Caco-2 (cell line): ENCODE measurements at regions of chr9 and their contacts with region 1.

Region 1: DNA sequence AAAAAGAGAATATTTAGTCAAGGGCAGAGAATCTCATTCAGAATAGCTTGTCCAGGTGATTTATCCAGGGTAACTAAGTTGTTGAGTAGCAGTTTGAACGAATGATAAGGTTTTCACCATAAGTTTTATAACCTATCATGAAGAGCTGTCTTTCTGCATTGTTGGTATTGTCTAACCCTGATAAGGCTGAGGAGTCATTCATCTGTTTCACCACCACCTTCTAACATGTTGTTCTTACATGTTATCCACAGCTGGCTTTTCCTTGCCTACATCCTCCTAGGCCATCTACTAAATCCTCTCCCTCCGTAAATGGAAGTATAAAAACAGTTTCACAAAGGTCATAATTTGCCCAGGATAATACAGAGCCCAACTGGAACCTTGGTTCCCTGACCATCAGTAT is 24.1 kb downstream of the ZNF462 start:
- DNase-seq: no peak
- H3K4me3 ChIP-seq: no peak overlapping the region
- H3K4me3 Mint-ChIP-seq: no peak overlapping the region
- H3K27ac Mint-ChIP-seq: no peak overlapping the region
- H3K4me1 ChIP-seq: peaks cover 62% of the 10 kb centered on the region
- H3K4me1 Mint-ChIP-seq: peaks cover 44% of the 10 kb centered on the region
- H3K27me3 ChIP-seq: no peaks in the 10 kb centered on the region
- H3K27me3 Mint-ChIP-seq: no peaks in the 10 kb centered on the region
- CTCF ChIP-seq: no peak

Region 2: GRCh38 chr9:106613250-106613737 is 273.8 kb before region 1 on chr9:
- CTCF ChIA-PET with region 1: no interaction called
- POLR2A ChIA-PET with region 1: no interaction called
- intact Hi-C with region 1: no loop called
- DNase-seq: no peak
- H3K4me3 ChIP-seq: no peak overlapping the region
- H3K4me3 Mint-ChIP-seq: no peak overlapping the region
- H3K27ac Mint-ChIP-seq: no peak overlapping the region
- H3K4me1 ChIP-seq: peaks cover 2% of the 10 kb centered on the region
- H3K4me1 Mint-ChIP-seq: peaks cover 4% of the 10 kb centered on the region
- H3K27me3 ChIP-seq: no peaks in the 10 kb centered on the region
- H3K27me3 Mint-ChIP-seq: peaks cover 2% of the 10 kb centered on the region
- CTCF ChIP-seq: no peak

Region 3: DNA sequence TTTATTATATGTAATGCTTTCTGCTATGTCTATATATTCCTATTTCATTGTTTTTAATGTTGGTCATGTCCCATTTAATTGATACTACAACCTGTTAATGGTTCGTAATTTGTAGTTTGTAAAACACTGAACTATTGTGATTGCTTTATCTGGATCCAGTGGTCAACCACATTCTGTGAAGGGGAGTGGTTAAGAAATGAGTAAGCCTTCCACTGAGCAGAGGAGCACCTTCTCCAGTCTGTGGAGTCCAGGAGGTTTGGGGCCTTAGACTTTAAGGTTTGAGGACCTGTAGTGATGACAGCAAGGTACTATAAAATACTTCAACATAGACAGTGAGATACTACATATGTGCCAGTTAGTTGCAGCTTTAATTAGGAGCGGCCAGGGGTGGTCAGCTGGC is 328.3 kb after region 1 on chr9:
- CTCF ChIA-PET with region 1: no interaction called
- POLR2A ChIA-PET with region 1: interaction called, 14 read pairs
- intact Hi-C with region 1: no loop called
- DNase-seq: no peak
- H3K4me3 ChIP-seq: no peak overlapping the region
- H3K4me3 Mint-ChIP-seq: no peak overlapping the region
- H3K27ac Mint-ChIP-seq: no peak overlapping the region
- H3K4me1 ChIP-seq: peaks cover 12% of the 10 kb centered on the region
- H3K4me1 Mint-ChIP-seq: peaks cover 12% of the 10 kb centered on the region
- H3K27me3 ChIP-seq: no peaks in the 10 kb centered on the region
- H3K27me3 Mint-ChIP-seq: no peaks in the 10 kb centered on the region
- CTCF ChIP-seq: no peak